MCF 10A (cell line): ENCODE measurements at regions of chr16 and their contacts with region 1.

Region 1: GRCh38 chr16:75224306-75225091 is 5.7 kb downstream of the CTRB1 start:
- DNase-seq: no peak
- H3K4me3 Mint-ChIP-seq: no peak overlapping the region
- H3K27ac Mint-ChIP-seq: no peak overlapping the region
- H3K4me1 Mint-ChIP-seq: no peaks in the 10 kb centered on the region
- H3K27me3 Mint-ChIP-seq: no peaks in the 10 kb centered on the region
- CTCF ChIP-seq: no peak

Region 2: DNA sequence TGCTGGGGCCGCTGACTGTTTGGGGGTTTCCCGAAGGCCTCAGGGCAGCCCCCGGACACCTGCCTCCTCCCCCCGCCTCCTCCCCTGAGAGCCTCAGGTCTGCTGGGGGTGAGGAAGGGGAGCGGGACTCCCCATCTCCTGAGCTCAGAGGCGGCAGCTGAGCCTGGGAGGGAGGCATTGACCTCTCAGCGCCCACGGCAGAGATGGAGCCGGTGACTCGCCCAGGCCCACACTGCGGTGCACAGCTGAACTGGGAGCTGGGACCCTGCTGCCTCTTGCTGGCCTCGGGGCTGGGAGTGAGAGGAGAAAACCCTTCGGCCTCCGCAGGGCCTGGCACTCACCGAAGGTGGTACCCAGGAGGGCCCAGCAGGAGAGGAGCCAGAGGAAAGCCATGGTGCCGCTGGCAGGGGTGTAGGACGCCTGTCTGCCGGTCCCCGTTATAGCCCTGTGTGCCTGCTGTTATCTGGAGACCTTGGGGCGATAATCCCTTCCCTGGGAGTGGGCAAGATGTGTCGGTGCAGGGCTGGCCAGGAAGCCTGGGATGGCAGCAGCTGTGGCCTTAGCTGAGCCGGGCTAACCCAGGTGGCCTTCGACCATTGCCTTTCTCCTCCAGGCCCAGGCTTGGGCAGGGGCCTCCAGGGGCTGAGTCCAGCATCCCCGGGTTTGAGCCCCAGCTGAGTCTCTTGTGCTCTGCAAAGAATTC is 17.6 kb before region 1 on chr16 and contains the start of gene CTRB2:
- CTCF ChIA-PET with region 1: interaction called, 4 read pairs
- POLR2A ChIA-PET with region 1: interaction called, 3 read pairs
- intact Hi-C with region 1: loop called (anchors 2 kb)
- DNase-seq: no peak
- H3K4me3 Mint-ChIP-seq: no peak within 1 kb of the TSS
- H3K27ac Mint-ChIP-seq: no peak within 1 kb of the TSS
- H3K4me1 Mint-ChIP-seq: no peaks in the 10 kb centered on the region
- H3K27me3 Mint-ChIP-seq: no peaks in the 10 kb centered on the region
- CTCF ChIP-seq: no peak
- total RNA-seq, gene CTRB2: not detected in 2 replicates

Region 3: DNA sequence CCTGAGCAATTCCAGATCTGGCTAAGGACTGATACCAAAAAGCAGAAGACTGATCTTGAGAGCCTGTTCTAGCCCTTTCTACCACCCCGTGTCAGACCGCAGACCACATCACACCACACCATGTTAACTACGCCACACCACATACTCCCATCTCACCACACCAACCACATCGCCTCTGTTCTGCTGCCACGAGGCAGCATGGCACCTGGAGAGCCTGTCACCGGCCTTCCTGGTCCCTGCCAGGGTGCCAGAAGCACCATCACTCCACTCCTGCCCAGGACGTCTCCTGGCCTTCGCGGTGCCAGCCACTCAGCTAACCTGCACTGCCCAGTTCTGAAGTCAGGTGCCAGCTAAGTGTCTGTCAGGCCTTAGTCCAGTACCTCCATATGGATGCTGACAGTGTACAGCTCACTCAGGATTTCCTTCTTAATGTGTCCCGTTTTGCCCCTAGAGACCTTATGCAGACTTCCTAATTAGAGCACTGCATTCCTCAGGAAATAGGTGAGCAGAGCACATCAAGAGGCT is 64.2 kb after region 1 on chr16:
- CTCF ChIA-PET with region 1: no interaction called
- POLR2A ChIA-PET with region 1: no interaction called
- intact Hi-C with region 1: no loop called
- DNase-seq: no peak
- H3K4me3 Mint-ChIP-seq: peak overlapping the region; percentile 54
- H3K27ac Mint-ChIP-seq: peak overlapping the region; percentile 37
- H3K4me1 Mint-ChIP-seq: peaks cover 18% of the 10 kb centered on the region
- H3K27me3 Mint-ChIP-seq: no peaks in the 10 kb centered on the region
- CTCF ChIP-seq: no peak